MCF 10A (cell line): ENCODE measurements at regions of chr11 and their contacts with region 1.

Region 1: GRCh38 chr11:1050581-1051355 is 14.2 kb upstream of the MUC6 start:
- DNase-seq: peak; percentile 85
- H3K4me3 Mint-ChIP-seq: no peak overlapping the region
- H3K27ac Mint-ChIP-seq: no peak overlapping the region
- H3K4me1 Mint-ChIP-seq: peaks cover 11% of the 10 kb centered on the region
- H3K27me3 Mint-ChIP-seq: peaks cover 14% of the 10 kb centered on the region
- CTCF ChIP-seq: peak; percentile 97

Region 2: GRCh38 chr11:842370-843002 is 208.3 kb before region 1 on chr11 and contains the starts of genes POLR2L and TSPAN4:
- CTCF ChIA-PET with region 1: interaction called, 3 read pairs
- POLR2A ChIA-PET with region 1: no interaction called
- intact Hi-C with region 1: loop called (anchors 2 kb)
- DNase-seq: peak; percentile 87
- H3K4me3 Mint-ChIP-seq: peak within 1 kb of the TSS; percentile 87
- H3K27ac Mint-ChIP-seq: peak within 1 kb of the TSS; percentile 90
- H3K4me1 Mint-ChIP-seq: peaks cover 31% of the 10 kb centered on the region
- H3K27me3 Mint-ChIP-seq: no peaks in the 10 kb centered on the region
- CTCF ChIP-seq: no peak
- total RNA-seq, gene POLR2L: 96.9 and 118 TPM in 2 replicates
- total RNA-seq, gene TSPAN4: 118 and 148 TPM in 2 replicates

Region 3: GRCh38 chr11:870127-870413 is 180.7 kb before region 1 on chr11:
- CTCF ChIA-PET with region 1: interaction called, 12 read pairs
- POLR2A ChIA-PET with region 1: interaction called, 4 read pairs
- intact Hi-C with region 1: no loop called
- DNase-seq: no peak
- H3K4me3 Mint-ChIP-seq: no peak overlapping the region
- H3K27ac Mint-ChIP-seq: no peak overlapping the region
- H3K4me1 Mint-ChIP-seq: no peaks in the 10 kb centered on the region
- H3K27me3 Mint-ChIP-seq: no peaks in the 10 kb centered on the region
- CTCF ChIP-seq: peak; percentile 9

Region 4: DNA sequence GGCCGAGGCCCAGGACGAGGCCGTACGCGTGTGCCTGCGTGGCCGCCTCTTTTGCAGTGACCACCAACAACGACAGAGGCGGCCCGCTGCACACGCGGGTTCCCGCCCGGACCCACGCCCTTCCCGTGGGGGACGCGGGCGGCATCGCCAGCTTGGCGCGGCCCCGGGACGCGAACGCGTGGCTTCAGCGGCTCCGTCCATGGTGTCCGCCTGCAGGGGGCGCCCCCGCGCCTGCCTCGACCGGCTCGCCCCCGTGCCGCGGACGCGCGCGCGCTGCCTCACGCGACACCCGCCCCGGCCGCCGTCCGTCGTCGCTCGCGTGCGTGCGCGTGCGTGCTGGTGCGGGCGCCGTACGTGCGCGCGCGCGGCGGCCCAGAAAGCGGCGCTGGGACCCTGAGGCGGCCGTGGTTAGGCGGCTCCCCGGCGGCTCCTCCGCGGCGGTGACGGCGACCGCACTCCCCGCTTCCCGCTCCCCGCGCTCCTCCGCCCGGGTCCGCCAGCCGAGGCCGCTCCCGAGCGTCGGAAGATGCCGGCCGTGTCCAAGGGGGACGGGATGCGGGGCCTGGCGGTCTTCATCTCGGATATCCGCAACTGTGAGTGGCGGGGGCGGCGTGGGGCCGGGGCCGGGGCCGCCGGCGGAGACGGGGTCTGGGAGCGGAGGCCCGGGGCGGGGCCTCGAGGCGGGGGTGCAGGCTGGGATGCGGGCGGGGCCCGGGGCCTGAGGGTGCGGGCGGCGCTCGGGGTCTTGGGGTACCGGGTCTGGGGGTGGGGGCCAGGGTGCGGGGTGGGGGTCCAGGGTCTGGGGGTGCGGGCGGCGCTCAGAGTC is 125.1 kb before region 1 on chr11 and contains the start of gene AP2A2:
- CTCF ChIA-PET with region 1: interaction called, 8 read pairs
- POLR2A ChIA-PET with region 1: no interaction called
- intact Hi-C with region 1: loop called (anchors 1 kb)
- DNase-seq: peak; percentile 80
- H3K4me3 Mint-ChIP-seq: peak within 1 kb of the TSS; percentile 83
- H3K27ac Mint-ChIP-seq: peak within 1 kb of the TSS; percentile 76
- H3K4me1 Mint-ChIP-seq: peaks cover 9% of the 10 kb centered on the region
- H3K27me3 Mint-ChIP-seq: no peaks in the 10 kb centered on the region
- CTCF ChIP-seq: peak; percentile 75
- total RNA-seq, gene AP2A2: 70.5 and 70.6 TPM in 2 replicates

Region 5: GRCh38 chr11:1005928-1006327 is 44.8 kb before region 1 on chr11:
- CTCF ChIA-PET with region 1: no interaction called
- POLR2A ChIA-PET with region 1: no interaction called
- intact Hi-C with region 1: no loop called
- DNase-seq: no peak
- H3K4me3 Mint-ChIP-seq: no peak overlapping the region
- H3K27ac Mint-ChIP-seq: no peak overlapping the region
- H3K4me1 Mint-ChIP-seq: no peaks in the 10 kb centered on the region
- H3K27me3 Mint-ChIP-seq: no peaks in the 10 kb centered on the region
- CTCF ChIP-seq: no peak

Region 6: GRCh38 chr11:1060824-1061616 is 10.3 kb after region 1 on chr11:
- CTCF ChIA-PET with region 1: interaction called, 22 read pairs
- POLR2A ChIA-PET with region 1: no interaction called
- intact Hi-C with region 1: no loop called
- DNase-seq: peak; percentile 84
- H3K4me3 Mint-ChIP-seq: peak overlapping the region; percentile 38
- H3K27ac Mint-ChIP-seq: peak overlapping the region; percentile 68
- H3K4me1 Mint-ChIP-seq: peaks cover 12% of the 10 kb centered on the region
- H3K27me3 Mint-ChIP-seq: no peaks in the 10 kb centered on the region
- CTCF ChIP-seq: no peak